ENCODE measurements at regions of chr5 and their contacts with region 1.

Region 1: GRCh38 chr5:42908509-42909488 is 97.1 kb upstream of the SELENOP start:
- DNase-seq: peak; percentile 87 to 94 (median 92)
- ATAC-seq: peak; percentile 91 to 95 (median 94)
- H3K4me3 ChIP-seq: peak overlapping the region in 11 of 12 donors; percentile 37 to 59 (median 57)
- H3K27ac ChIP-seq: peak overlapping the region in 1 of 12 donors; percentile 0
- H3K4me1 ChIP-seq: peaks cover 0 to 6% (median 1%) of the 10 kb centered on the region in 12 donors
- H3K27me3 ChIP-seq: peaks cover 0 to 6% (median 0%) of the 10 kb centered on the region in 9 donors
- CTCF ChIP-seq: peak; percentile 55 to 94 (median 82)
- POLR2A ChIP-seq: no peak

Region 2: GRCh38 chr5:42828671-42829070 is 80.1 kb before region 1 on chr5:
- intact Hi-C with region 1: no loop called
- DNase-seq: no peak
- ATAC-seq: no peak
- H3K4me3 ChIP-seq: no peak overlapping the region
- H3K27ac ChIP-seq: no peak overlapping the region
- H3K4me1 ChIP-seq: peaks cover 0 to 11% (median 0%) of the 10 kb centered on the region in 12 donors
- H3K27me3 ChIP-seq: no peaks in the 10 kb centered on the region
- CTCF ChIP-seq: no peak
- POLR2A ChIP-seq: no peak

Region 3: GRCh38 chr5:42950440-42951292 is 41.9 kb after region 1 on chr5:
- intact Hi-C with region 1: loop called in 2 of 10 experiments (anchors 5 kb)
- DNase-seq: peak in 4 of 5 donors; percentile 69 to 79 (median 75)
- ATAC-seq: peak; percentile 69 to 92 (median 90)
- H3K4me3 ChIP-seq: peak overlapping the region; percentile 8 to 64 (median 57)
- H3K27ac ChIP-seq: peak overlapping the region; percentile 71 to 96 (median 92)
- H3K4me1 ChIP-seq: peaks cover 0 to 43% (median 18%) of the 10 kb centered on the region in 12 donors
- H3K27me3 ChIP-seq: peaks cover 9 to 100% (median 65%) of the 10 kb centered on the region in 9 donors
- CTCF ChIP-seq: peak in 1 of 12 donors; percentile 7
- POLR2A ChIP-seq: no peak

Region 4: DNA sequence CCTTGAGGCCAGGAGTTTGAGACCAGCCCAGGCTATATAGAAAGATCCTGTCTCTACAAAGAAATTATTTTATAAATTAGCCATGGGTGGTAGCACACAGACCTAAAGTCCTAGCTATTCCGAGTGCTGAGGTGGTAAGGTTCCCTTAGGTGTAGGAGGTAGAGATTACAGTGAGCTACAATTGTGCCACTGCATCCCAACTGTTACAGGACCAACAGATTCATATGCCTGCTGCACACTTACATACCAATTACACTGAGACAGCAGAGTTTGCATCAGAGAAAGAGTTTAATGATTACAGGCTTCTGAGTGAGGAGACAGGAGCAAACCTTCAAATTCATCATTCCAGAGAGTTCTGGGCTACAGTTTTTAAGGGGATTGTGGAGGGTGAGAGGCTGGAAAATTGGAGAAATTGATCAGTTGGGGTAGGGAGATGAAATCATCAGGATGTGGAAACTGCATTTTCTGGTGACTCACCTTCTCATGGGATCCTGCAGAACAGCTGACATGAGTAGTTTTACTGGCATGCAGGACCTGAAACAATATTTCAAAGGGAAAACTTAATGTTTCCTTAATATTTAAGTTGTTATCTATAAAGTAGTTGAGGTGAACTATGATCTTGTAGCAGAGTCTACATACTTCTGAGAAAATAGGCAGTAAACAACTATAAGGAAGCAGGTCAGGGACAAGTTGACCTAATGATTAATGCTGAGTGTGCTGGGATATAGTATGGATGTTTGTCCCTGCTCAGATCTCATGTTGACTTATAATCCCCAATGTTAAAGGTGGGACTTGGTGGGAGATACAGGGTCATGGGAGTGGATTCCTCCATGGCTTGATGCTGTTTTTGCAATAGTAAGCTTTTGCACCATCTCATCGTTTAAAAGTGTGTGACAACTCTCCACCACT is 76.6 kb after region 1 on chr5:
- intact Hi-C with region 1: loop called in 3 of 10 experiments (anchors 5 to 10 kb)
- DNase-seq: no peak
- ATAC-seq: no peak
- H3K4me3 ChIP-seq: no peak overlapping the region
- H3K27ac ChIP-seq: no peak overlapping the region
- H3K4me1 ChIP-seq: peaks cover 0 to 26% (median under 1%) of the 10 kb centered on the region in 12 donors
- H3K27me3 ChIP-seq: peaks cover 0 to 40% (median 1%) of the 10 kb centered on the region in 9 donors
- CTCF ChIP-seq: no peak
- POLR2A ChIP-seq: no peak

Region 5: DNA sequence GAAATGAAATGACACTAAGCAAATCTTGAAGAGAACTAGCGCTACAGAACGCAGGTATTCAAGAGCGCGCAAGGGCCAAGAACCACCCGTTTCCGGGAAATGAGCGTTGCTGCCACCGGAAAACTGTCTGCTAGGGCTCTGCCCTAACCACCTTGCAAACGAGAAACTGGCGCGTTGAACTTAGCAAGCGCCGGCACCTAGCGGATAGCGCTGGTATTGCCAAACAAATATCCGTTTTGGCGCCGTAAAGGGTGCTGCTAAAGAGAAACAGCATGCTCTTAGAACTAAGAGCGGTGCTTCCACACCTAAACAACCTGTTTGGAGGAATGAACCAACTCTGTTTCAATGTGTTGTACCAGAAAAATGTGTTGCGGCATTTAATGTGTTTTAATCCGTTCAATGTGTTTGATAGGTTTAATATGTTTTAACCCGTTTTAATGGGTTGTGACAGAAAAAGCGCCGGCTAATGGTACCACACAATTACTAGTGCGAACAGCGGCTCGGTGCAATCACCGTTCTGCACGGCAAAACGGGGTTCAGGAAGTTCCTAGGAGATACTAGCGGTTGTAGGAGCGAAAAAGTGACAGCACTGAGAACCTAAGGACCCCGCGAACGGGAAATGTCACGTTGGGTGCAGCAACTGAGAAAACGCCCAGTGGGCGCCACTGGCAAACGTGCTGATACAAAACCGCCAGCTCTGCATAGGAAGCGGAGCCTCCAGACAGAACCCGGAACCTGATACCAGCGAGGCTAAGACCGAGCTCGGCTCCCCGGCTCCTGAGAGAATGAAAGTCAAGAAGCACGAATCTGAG is 131.7 kb after region 1 on chr5 and contains the start of gene ANXA2R:
- intact Hi-C with region 1: loop called in 5 of 10 experiments (anchors 5 kb)
- DNase-seq: peak; percentile 87 to 90 (median 89)
- ATAC-seq: peak; percentile 59 to 70 (median 68)
- H3K4me3 ChIP-seq: peak within 1 kb of the TSS; percentile 28 to 77 (median 66)
- H3K27ac ChIP-seq: peak within 1 kb of the TSS; percentile 89 to 99 (median 95)
- H3K4me1 ChIP-seq: peaks cover 0 to 42% (median 7%) of the 10 kb centered on the region in 12 donors
- H3K27me3 ChIP-seq: peaks cover 0 to 80% (median 16%) of the 10 kb centered on the region in 9 donors
- CTCF ChIP-seq: peak; percentile 71 to 86 (median 80)
- POLR2A ChIP-seq: no peak
- total RNA-seq, gene ANXA2R: 0.49 to 2.4 (median 1.4) TPM

Region 6: DNA sequence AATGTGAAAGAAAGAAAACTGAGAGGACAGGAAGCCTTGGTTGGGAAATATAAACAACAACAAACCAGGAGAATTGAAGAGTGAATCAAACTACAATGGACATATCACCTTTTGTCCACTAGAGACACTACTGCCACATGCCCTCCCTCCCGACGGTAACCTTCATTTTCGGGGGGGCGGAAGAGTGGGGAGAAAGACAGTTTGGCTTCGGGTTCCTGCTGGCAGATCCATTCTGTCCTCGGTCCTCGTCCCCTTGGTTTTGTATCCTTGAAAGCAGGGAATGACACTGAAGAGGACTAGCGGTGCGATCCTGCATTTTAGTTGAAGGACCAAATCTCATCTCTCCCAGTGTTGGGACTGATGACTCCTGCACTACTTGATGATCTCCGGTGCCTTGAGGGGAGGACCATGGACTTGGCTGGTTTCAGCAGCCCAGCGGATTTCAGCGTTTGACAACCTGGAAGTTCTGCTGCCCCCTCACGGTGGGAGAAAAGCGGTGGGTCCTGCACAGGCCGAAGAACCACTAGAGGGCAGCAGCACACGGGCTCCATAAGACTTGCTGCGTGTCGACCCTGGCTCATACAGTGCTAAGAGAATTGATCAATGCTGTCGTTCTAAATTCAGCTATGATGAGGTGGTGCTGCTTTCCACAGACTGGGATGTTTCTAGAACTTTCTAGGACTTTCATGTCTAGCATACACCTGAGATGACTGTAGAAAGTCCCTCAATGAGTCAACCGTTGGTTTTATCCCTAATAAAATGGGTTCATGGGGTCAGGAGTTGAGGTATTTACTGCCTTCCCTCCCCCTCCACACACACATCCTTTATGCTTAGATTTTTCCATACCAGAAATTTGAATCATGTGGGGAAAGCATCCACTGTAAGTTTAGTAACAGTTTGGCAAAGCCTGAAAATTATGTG is 196.8 kb after region 1 on chr5:
- intact Hi-C with region 1: loop called in 5 of 10 experiments (anchors 2 to 10 kb)
- DNase-seq: peak; percentile 89 to 93 (median 90)
- ATAC-seq: peak; percentile 90 to 94 (median 90)
- H3K4me3 ChIP-seq: peak overlapping the region in 11 of 12 donors; percentile 21 to 62 (median 50)
- H3K27ac ChIP-seq: peak overlapping the region in 11 of 12 donors; percentile 35 to 77 (median 61)
- H3K4me1 ChIP-seq: peaks cover 0 to 16% (median 4%) of the 10 kb centered on the region in 12 donors
- H3K27me3 ChIP-seq: no peaks in the 10 kb centered on the region
- CTCF ChIP-seq: peak; percentile 98 to 100 (median 99)
- POLR2A ChIP-seq: peak in 1 of 2 donors; percentile 23

Region 7: GRCh38 chr5:43227655-43228054 is 318.9 kb after region 1 on chr5:
- intact Hi-C with region 1: no loop called
- DNase-seq: no peak
- ATAC-seq: no peak
- H3K4me3 ChIP-seq: no peak overlapping the region
- H3K27ac ChIP-seq: no peak overlapping the region
- H3K4me1 ChIP-seq: no peaks in the 10 kb centered on the region
- H3K27me3 ChIP-seq: no peaks in the 10 kb centered on the region
- CTCF ChIP-seq: peak; percentile 4 to 50 (median 32)
- POLR2A ChIP-seq: no peak